T-cell (primary cell): ENCODE measurements at regions of chr12 and their contacts with region 1.

Region 1: GRCh38 chr12:1463073-1463905 is 131.1 kb downstream of the FBXL14 start:
- DNase-seq: no peak
- ATAC-seq: no peak
- H3K4me3 ChIP-seq: no peak overlapping the region
- H3K4me3 Mint-ChIP-seq: no peak overlapping the region
- H3K27ac ChIP-seq: no peak overlapping the region
- H3K27ac Mint-ChIP-seq: no peak overlapping the region
- H3K4me1 ChIP-seq: no peaks in the 10 kb centered on the region
- H3K4me1 Mint-ChIP-seq: no peaks in the 10 kb centered on the region
- H3K27me3 ChIP-seq: no peaks in the 10 kb centered on the region
- H3K27me3 Mint-ChIP-seq: no peaks in the 10 kb centered on the region

Region 2: DNA sequence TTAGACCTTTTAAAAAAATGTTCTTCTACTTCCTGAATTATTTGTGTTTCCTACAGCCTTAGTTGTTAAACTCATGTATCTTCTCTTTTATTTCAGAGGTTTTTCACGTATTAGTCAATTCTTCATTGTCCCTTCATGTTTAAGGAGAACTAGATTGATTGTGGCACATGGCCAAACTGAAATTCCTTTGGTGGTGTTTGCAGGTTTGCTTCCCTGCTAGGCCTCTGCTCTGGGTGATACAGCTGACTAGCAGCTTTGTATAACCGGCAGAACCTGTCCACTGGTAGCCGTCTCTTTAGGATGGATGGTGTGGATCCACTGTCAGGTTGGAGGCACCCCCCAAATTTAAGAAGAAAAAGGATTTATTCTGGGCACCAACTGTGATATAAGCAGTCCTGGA is 131.0 kb before region 1 on chr12:
- CTCF ChIA-PET with region 1: no interaction called
- POLR2A ChIA-PET with region 1: no interaction called
- DNase-seq: no peak
- ATAC-seq: no peak
- H3K4me3 ChIP-seq: no peak overlapping the region
- H3K4me3 Mint-ChIP-seq: no peak overlapping the region
- H3K27ac ChIP-seq: no peak overlapping the region
- H3K27ac Mint-ChIP-seq: no peak overlapping the region
- H3K4me1 ChIP-seq: no peaks in the 10 kb centered on the region
- H3K4me1 Mint-ChIP-seq: peaks cover 3 to 5% (median 4%) of the 10 kb centered on the region in 3 donors
- H3K27me3 ChIP-seq: no peaks in the 10 kb centered on the region
- H3K27me3 Mint-ChIP-seq: no peaks in the 10 kb centered on the region

Region 3: DNA sequence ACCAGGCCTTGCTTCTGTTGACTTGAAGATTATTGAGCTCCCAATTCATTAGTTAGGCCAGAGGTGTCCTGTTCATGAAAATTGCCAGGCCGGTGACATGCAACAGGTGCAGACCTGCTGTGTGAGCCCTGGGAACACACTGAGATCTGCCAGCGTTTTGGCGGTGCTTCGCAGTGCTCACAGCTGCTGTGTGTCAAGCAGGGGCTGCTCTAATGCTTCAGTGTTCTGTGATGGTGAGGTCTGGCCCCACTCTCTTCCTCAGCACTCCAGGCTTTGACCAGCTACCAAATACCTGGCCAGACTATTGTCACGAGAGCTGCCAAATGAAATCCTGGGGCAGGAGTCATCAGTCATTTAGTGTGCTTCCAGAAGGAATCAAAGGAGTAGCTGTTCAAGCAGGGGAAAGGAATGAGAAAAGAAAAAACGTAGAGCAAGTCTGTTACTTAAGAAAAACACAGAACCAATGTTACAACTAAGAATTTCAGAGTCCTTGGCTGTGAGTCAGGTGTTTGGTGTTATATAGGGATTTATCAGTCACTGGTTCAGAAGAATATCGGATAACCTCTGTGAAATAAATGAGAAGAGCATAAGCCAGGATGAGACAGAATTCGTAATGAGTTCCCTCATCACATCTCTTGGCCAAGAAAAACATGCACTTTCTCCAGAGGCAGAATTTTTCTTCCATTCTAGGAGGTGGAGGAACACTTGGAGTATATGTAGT is 19.7 kb before region 1 on chr12:
- CTCF ChIA-PET with region 1: no interaction called
- POLR2A ChIA-PET with region 1: interaction called in 1 of 2 experiments, 16 read pairs
- DNase-seq: no peak
- ATAC-seq: no peak
- H3K4me3 ChIP-seq: no peak overlapping the region
- H3K4me3 Mint-ChIP-seq: no peak overlapping the region
- H3K27ac ChIP-seq: no peak overlapping the region
- H3K27ac Mint-ChIP-seq: no peak overlapping the region
- H3K4me1 ChIP-seq: no peaks in the 10 kb centered on the region
- H3K4me1 Mint-ChIP-seq: no peaks in the 10 kb centered on the region
- H3K27me3 ChIP-seq: no peaks in the 10 kb centered on the region
- H3K27me3 Mint-ChIP-seq: no peaks in the 10 kb centered on the region

Region 4: DNA sequence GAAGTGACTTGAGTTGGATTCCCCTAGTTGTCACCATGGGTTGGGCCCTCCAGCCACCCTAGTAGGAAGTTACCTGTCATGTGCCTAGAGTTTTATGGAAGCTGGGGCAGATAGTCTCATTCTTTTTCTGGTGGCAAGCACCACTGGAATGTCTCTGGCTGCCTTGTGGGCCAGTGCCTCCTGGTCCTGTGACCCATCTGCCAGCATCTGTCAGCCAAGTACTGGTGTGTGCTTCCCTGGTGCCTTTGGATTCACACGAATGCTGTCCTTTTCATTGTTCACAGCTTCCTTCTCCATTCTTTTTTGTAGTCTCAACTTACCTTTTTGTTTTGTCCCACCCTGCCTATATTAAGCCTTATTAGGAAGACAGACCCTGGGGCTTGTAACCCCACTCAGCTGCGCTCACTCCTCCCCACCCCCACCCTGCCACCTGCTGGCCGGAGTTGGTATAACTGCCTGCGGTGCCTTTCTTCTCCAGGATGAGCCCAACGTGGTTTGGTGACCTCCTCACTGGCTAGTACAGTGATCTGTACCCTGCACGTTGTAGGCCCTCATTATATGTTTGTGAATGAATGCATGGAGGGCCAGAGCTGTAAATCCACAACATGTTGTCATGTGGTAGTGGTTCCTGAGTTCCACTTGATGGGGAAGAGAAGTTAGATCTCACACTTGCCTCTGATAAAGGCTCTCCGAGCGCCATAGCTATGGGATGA is 1739.6 kb after region 1 on chr12:
- CTCF ChIA-PET with region 1: no interaction called
- POLR2A ChIA-PET with region 1: no interaction called
- DNase-seq: peak in 31 of 35 experiments; percentile 8 to 58 (median 36)
- ATAC-seq: peak in 2 of 4 experiments; percentile 45
- H3K4me3 ChIP-seq: no peak overlapping the region
- H3K4me3 Mint-ChIP-seq: no peak overlapping the region
- H3K27ac ChIP-seq: no peak overlapping the region
- H3K27ac Mint-ChIP-seq: no peak overlapping the region
- H3K4me1 ChIP-seq: peaks cover 4 to 9% of the 10 kb centered on the region in 2 experiments
- H3K4me1 Mint-ChIP-seq: peaks cover 7 to 17% (median 9%) of the 10 kb centered on the region in 3 donors
- H3K27me3 ChIP-seq: peaks cover 12 to 62% of the 10 kb centered on the region in 2 experiments
- H3K27me3 Mint-ChIP-seq: peaks cover 33 to 44% of the 10 kb centered on the region in 2 donors